CD4-positive, alpha-beta T cell (primary cell): ENCODE measurements at regions of chr1 and their contacts with region 1.

Region 1: GRCh38 chr1:41353726-41354125 is 7.5 kb upstream of the FOXO6 start:
- DNase-seq: peak in 1 of 14 experiments; percentile 20
- ATAC-seq: no peak
- H3K4me3 ChIP-seq: no peak overlapping the region
- H3K4me3 Mint-ChIP-seq: no peak overlapping the region
- H3K27ac ChIP-seq: no peak overlapping the region
- H3K27ac Mint-ChIP-seq: no peak overlapping the region
- H3K4me1 ChIP-seq: peaks cover 3% of the 10 kb centered on the region
- H3K4me1 Mint-ChIP-seq: no peaks in the 10 kb centered on the region
- H3K27me3 ChIP-seq: peaks cover 0 to 11% of the 10 kb centered on the region in 2 experiments
- H3K27me3 Mint-ChIP-seq: peaks cover 22% of the 10 kb centered on the region
- CTCF ChIP-seq: no peak

Region 2: GRCh38 chr1:40668769-40669525 is 684.8 kb before region 1 on chr1:
- CTCF ChIA-PET with region 1: no interaction called
- POLR2A ChIA-PET with region 1: no interaction called
- intact Hi-C with region 1: loop called in 1 of 2 experiments (anchors 10 kb)
- DNase-seq: peak; percentile 72 to 91 (median 82)
- ATAC-seq: peak; percentile 78
- H3K4me3 ChIP-seq: peak overlapping the region; percentile 36
- H3K4me3 Mint-ChIP-seq: peak overlapping the region; percentile 69
- H3K27ac ChIP-seq: no peak overlapping the region
- H3K27ac Mint-ChIP-seq: no peak overlapping the region
- H3K4me1 ChIP-seq: peaks cover 23% of the 10 kb centered on the region
- H3K4me1 Mint-ChIP-seq: peaks cover 20% of the 10 kb centered on the region
- H3K27me3 ChIP-seq: no peaks in the 10 kb centered on the region
- H3K27me3 Mint-ChIP-seq: no peaks in the 10 kb centered on the region
- CTCF ChIP-seq: peak; percentile 94